ENCODE measurements at regions of chr22 and their contacts with region 1.

Region 1: GRCh38 chr22:36546092-36546804 is 17.3 kb upstream of the EIF3D start:
- DNase-seq: peak; percentile 58 to 59
- H3K4me3 ChIP-seq: peak overlapping the region; percentile 42
- H3K27ac ChIP-seq: 0 out of 2 replicates have a peak overlapping the region, but pooled peaks have one; percentile 7
- H3K4me1 ChIP-seq: peaks cover 32% of the 10 kb centered on the region
- H3K27me3 ChIP-seq: peaks cover 8% of the 10 kb centered on the region
- CTCF ChIP-seq: peak; percentile 91

Region 2: GRCh38 chr22:36481393-36482168 is 64.7 kb before region 1 on chr22 and contains the start of gene TXN2:
- CTCF ChIA-PET with region 1: no interaction called
- POLR2A ChIA-PET with region 1: no interaction called
- intact Hi-C with region 1: no loop called
- DNase-seq: peak; percentile 90 to 95
- H3K4me3 ChIP-seq: peak within 1 kb of the TSS; percentile 70
- H3K27ac ChIP-seq: peak within 1 kb of the TSS; percentile 95
- H3K4me1 ChIP-seq: peaks cover 38% of the 10 kb centered on the region
- H3K27me3 ChIP-seq: no peaks in the 10 kb centered on the region
- CTCF ChIP-seq: no peak
- total RNA-seq, gene TXN2: 89.0 and 95.1 TPM in 2 replicates

Region 3: GRCh38 chr22:36528795-36529751 is 17.2 kb before region 1 on chr22 and contains the start of gene EIF3D:
- CTCF ChIA-PET with region 1: interaction called, 10 read pairs
- POLR2A ChIA-PET with region 1: interaction called, 8 read pairs
- intact Hi-C with region 1: loop called (anchors 1 kb)
- DNase-seq: peak; percentile 99 to 100
- H3K4me3 ChIP-seq: peak within 1 kb of the TSS; percentile 90
- H3K27ac ChIP-seq: peak within 1 kb of the TSS; percentile 96
- H3K4me1 ChIP-seq: peaks cover 25% of the 10 kb centered on the region
- H3K27me3 ChIP-seq: no peaks in the 10 kb centered on the region
- CTCF ChIP-seq: peak; percentile 37; the same call in 1 of the 2 replicates
- total RNA-seq, gene EIF3D: 270 and 312 TPM in 2 replicates

Region 4: GRCh38 chr22:36659762-36660509 is 113.7 kb after region 1 on chr22:
- CTCF ChIA-PET with region 1: interaction called, 3 read pairs
- POLR2A ChIA-PET with region 1: no interaction called
- intact Hi-C with region 1: loop called (anchors 2 kb)
- DNase-seq: peak; percentile 98 to 99
- H3K4me3 ChIP-seq: peak overlapping the region; percentile 48
- H3K27ac ChIP-seq: peak overlapping the region; percentile 79
- H3K4me1 ChIP-seq: peaks cover 28% of the 10 kb centered on the region
- H3K27me3 ChIP-seq: no peaks in the 10 kb centered on the region
- CTCF ChIP-seq: no peak

Region 5: DNA sequence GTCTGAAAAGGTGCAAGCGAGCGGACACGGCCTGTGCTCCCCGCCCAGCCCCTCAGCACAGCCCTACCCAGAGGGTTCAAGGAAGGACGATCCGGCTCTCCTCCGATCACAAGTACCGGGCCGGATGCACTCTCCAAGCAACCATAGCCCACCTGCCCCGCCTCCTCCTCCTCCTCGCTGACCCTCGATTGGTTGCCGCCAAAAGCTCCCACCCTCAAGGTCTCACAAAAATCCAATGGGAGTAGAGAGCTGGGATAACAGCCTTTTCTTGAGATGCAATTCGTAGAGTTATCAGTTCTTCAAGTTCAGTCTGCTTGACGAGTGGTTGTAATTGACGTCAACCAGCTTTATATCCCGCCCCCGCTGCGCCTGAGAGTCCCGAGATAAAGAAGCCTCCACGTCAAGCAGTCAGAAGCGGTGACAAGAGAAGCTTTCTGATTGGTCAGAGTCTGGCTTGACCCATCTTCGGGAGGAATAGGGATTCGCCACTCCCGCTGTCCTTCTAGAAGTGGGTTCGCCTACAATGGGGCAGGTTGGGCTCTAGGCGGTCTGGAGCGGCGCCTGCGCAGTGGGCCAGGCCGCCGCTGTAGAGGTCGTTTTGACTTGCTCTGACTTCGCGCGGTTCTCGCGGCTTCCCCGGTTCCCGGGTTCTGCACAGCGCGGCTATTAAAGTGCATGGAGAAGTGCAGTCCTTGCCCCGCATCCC is 229.9 kb after region 1 on chr22 and contains the start of gene IFT27:
- CTCF ChIA-PET with region 1: interaction called, 4 read pairs
- POLR2A ChIA-PET with region 1: no interaction called
- intact Hi-C with region 1: loop called (anchors 1 kb)
- DNase-seq: peak; percentile 99 to 100
- H3K4me3 ChIP-seq: peak within 1 kb of the TSS; percentile 76
- H3K27ac ChIP-seq: no peak within 1 kb of the TSS
- H3K4me1 ChIP-seq: peaks cover 13% of the 10 kb centered on the region
- H3K27me3 ChIP-seq: no peaks in the 10 kb centered on the region
- CTCF ChIP-seq: no peak
- total RNA-seq, gene IFT27: 74.2 and 84.2 TPM in 2 replicates

Region 6: GRCh38 chr22:36873680-36874537 is 327.7 kb after region 1 on chr22:
- CTCF ChIA-PET with region 1: no interaction called
- POLR2A ChIA-PET with region 1: no interaction called
- intact Hi-C with region 1: loop called (anchors 5 kb)
- DNase-seq: peak; percentile 66 to 97
- H3K4me3 ChIP-seq: peak overlapping the region; percentile 8; the same call in 1 of the 2 replicates
- H3K27ac ChIP-seq: peak overlapping the region; percentile 90
- H3K4me1 ChIP-seq: peaks cover 59% of the 10 kb centered on the region
- H3K27me3 ChIP-seq: no peaks in the 10 kb centered on the region
- CTCF ChIP-seq: peak; percentile 80

Region 7: DNA sequence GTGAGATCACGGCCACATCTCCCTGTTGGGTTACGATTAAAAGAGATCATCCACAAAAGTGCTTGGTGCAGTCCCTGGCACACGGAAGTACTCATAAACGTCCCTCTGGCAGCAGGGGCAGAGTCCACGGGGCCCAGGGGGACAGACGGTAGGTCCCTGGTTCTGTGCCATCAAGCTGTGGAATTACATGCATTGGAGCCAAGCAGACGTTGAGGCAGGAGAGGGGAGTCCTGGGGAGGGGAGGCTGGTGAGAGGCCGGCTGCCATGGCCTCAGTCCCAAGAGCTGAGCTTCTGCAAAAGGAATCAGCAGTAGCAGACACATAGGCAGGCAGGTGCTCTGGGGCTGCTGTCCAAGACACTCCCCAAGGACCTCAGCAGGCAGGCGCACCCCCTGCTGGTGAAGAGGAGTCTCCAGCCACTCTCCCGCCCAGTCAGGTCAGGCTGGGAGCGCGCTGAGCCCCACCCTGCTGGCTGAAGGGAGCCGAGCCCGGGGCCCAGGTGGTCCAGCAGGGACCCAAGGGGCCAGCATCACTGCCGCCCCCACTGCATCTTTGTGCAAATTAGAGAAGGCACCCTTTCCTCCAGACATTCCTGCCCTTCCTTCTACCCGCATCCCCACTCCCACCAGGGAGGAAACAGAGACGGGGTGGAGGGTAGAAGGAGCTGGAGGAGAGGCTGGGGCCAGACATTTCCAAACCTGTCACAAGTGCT is 497.7 kb after region 1 on chr22:
- CTCF ChIA-PET with region 1: no interaction called
- POLR2A ChIA-PET with region 1: no interaction called
- intact Hi-C with region 1: loop called (anchors 5 kb)
- DNase-seq: peak; percentile 74 to 80
- H3K4me3 ChIP-seq: no peak overlapping the region
- H3K27ac ChIP-seq: no peak overlapping the region
- H3K4me1 ChIP-seq: peaks cover 38% of the 10 kb centered on the region
- H3K27me3 ChIP-seq: no peaks in the 10 kb centered on the region
- CTCF ChIP-seq: peak; percentile 93

Measured in PC-9 (cell line).